ENCODE measurements at regions of chr3 and their contacts with region 1.

Region 1: DNA sequence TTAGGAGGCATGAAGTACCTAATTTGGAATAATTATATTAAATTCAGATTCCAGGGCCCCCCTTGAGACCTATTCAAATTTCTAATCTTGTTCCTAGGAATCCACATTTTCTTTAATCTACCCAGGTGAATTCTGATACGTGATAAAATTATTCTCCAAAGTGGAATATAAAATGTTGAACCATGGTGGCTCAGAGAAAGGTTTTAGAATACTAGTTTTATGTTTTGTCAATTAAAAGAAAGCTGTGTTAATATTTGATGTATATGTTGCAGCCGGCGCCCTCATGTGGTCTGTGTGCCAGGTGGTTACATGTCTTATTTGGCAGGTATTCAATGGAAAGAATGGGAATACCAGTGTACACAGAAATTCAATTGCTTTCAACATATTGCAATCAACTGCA is 321.8 kb downstream of the FEZF2 start:
- DNase-seq: peak; percentile 65
- H3K4me3 Mint-ChIP-seq: no peak overlapping the region
- H3K27ac Mint-ChIP-seq: no peak overlapping the region
- H3K4me1 Mint-ChIP-seq: peaks cover under 1% of the 10 kb centered on the region
- H3K27me3 Mint-ChIP-seq: no peaks in the 10 kb centered on the region
- CTCF ChIP-seq: peak; percentile 27

Region 2: GRCh38 chr3:62039586-62039985 is 11.9 kb before region 1 on chr3:
- CTCF ChIA-PET with region 1: interaction called, 26 read pairs
- POLR2A ChIA-PET with region 1: no interaction called
- intact Hi-C with region 1: no loop called
- DNase-seq: no peak
- H3K4me3 Mint-ChIP-seq: no peak overlapping the region
- H3K27ac Mint-ChIP-seq: no peak overlapping the region
- H3K4me1 Mint-ChIP-seq: peaks cover 11% of the 10 kb centered on the region
- H3K27me3 Mint-ChIP-seq: no peaks in the 10 kb centered on the region
- CTCF ChIP-seq: no peak